Adrenal gland (tissue), 19 donors: ENCODE measurements at regions of chr14 and their contacts with region 1.

Region 1: DNA sequence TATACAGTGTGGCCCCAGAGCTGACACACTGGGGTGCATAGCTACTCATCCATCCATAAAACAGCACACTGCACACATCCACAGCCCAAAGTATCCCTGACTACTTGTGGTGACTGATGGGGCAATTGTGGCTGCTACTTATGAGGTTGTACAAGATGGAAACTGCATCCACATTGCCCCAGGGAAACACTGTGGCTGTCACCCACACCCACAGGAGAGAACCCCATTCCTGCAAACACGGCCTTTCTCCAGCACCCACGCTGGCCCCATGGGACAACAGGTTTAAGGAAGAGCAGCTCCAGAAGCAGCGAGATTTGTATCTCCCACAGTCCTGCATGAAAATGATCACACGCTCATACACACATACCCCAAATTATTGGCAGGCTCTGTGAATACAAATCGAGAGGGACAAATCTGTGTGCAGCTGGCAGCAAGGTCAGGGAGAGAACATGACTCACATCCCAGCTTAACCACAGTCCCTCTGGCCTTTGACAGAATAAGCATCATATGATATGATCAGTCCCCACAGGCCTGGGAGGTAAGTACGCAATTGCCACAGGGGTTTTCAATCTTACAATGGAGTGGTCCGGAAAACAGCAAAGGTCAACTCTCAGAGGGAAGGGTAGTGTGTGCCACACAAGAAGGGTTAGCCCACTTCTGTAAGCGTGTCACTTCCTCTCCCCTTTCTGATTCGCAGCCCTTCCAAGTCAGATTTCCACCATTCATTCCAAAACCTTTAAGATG is 61.9 kb downstream of the ESR2 start:
- DNase-seq: peak; percentile 73 to 92 (median 87)
- H3K4me3 ChIP-seq: no peak overlapping the region
- H3K27ac ChIP-seq: peak overlapping the region; percentile 71 to 96 (median 91)
- H3K4me1 ChIP-seq: peaks cover 10 to 26% of the 10 kb centered on the region in 2 donors
- H3K27me3 ChIP-seq: no peaks in the 10 kb centered on the region
- CTCF ChIP-seq: peak in 1 of 6 experiments; percentile 5
- POLR2A ChIP-seq: peak in 1 of 2 donors; percentile 62

Region 2: DNA sequence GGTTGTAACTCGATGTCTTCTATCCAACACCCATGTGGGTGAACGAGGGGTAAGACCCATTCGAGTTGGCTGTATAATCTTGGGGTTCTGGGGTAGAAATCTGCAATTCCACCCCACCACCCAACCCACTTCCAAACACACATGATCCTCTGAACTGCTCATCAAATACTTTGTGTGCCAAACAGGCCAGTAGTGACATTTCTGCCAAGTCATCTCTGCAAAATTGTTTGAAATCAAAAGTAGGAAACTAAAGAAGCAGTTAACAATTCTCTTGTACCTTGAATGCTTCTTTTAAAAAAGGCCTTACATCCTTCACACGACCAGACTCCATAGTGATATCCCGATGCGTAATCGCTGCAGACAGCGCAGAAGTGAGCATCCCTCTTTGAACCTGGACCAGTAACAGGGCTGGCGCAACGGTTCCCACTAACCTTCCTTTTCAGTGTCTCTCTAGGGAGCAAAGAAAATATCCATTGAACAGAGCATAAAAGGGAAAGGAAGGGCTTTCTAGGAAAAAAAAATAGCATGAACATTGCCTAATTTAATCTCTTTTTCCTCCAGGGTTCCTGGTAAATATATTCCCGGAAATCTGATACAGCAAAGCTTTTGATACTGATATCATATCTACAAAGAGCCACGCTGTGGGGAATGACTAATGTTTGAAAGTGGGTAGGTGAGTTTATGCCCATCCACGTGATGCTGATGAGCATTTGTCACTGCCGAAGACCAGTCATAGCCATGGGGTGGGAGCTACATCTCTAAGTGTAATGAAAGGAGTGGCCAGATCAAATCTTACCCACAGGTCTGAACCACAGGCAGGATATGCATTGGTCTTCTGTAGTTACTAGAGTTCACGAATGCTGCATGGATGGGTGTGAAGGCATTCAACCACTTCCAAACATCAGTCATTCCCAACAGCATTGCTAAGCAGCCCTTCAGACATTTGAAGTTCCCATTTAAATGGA is 47.7 kb after region 1 on chr14:
- intact Hi-C with region 1: loop called in 1 of 2 experiments (anchors 10 kb)
- DNase-seq: peak in 3 of 7 donors; percentile 13 to 41 (median 34)
- H3K4me3 ChIP-seq: no peak overlapping the region
- H3K27ac ChIP-seq: peak overlapping the region in 1 of 5 donors; percentile 36
- H3K4me1 ChIP-seq: no peaks in the 10 kb centered on the region
- H3K27me3 ChIP-seq: no peaks in the 10 kb centered on the region
- CTCF ChIP-seq: no peak
- POLR2A ChIP-seq: no peak

Region 3: GRCh38 chr14:64612021-64612380 is 379.7 kb after region 1 on chr14:
- intact Hi-C with region 1: no loop called
- DNase-seq: no peak
- H3K4me3 ChIP-seq: no peak overlapping the region
- H3K27ac ChIP-seq: peak overlapping the region in 3 of 5 donors; percentile 26 to 80 (median 68)
- H3K4me1 ChIP-seq: no peaks in the 10 kb centered on the region
- H3K27me3 ChIP-seq: no peaks in the 10 kb centered on the region
- CTCF ChIP-seq: no peak
- POLR2A ChIP-seq: no peak